Uterus (tissue), 4 donors: ENCODE measurements at regions of chr14 and their contacts with region 1.

Region 1: DNA sequence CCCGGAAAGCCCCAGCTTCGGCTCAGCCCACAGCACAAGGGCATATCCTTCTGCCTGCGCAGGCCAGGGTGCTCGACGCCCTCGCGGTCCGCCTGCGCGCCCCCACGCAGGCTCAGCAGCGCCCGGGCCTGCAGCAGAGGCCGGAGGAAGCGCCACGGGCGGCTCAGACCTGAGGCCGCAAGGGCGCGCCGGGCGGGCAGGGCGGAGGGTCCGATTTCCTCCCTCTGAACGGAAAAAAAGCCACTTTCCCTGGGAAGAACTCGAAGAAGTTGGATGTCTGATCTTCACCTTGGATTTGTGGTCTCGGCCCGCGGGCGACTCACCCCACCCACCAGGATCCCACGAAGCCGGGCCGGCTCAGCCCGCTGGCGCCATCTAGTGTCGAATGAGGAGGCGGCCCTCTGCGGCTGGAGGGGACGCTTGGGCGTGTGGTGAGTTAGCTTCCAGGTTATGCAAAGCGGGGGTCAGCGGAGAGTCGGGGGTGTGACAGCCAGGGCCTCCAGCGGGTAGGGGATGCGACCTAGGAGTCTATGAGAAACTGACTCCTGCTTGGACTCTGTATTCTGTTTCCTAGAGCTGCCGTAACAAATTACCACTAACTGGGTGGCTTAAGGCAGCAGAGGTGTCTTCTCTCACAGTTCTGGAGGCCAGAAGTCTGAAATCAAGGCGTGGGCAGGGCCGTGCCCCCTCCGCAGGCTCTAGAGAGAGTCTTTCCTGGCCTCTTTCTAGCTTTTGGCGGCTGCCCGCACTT is 40.0 kb upstream of the SRSF5 start:
- DNase-seq: peak; percentile 77 to 84
- H3K4me3 ChIP-seq: peak overlapping the region in 1 of 2 donors; percentile 29
- H3K27ac ChIP-seq: peak overlapping the region; percentile 48 to 60
- H3K4me1 ChIP-seq: no peaks in the 10 kb centered on the region
- H3K27me3 ChIP-seq: no peaks in the 10 kb centered on the region
- CTCF ChIP-seq: peak; percentile 97 to 98 (median 98)
- POLR2A ChIP-seq: no peak

Region 2: GRCh38 chr14:69519204-69520100 is 207.5 kb before region 1 on chr14:
- intact Hi-C with region 1: no loop called
- DNase-seq: peak in 1 of 2 donors; percentile 48
- H3K4me3 ChIP-seq: no peak overlapping the region
- H3K27ac ChIP-seq: peak overlapping the region; percentile 45 to 52
- H3K4me1 ChIP-seq: peaks cover 0 to 3% of the 10 kb centered on the region in 2 donors
- H3K27me3 ChIP-seq: no peaks in the 10 kb centered on the region
- CTCF ChIP-seq: no peak
- POLR2A ChIP-seq: no peak

Region 3: DNA sequence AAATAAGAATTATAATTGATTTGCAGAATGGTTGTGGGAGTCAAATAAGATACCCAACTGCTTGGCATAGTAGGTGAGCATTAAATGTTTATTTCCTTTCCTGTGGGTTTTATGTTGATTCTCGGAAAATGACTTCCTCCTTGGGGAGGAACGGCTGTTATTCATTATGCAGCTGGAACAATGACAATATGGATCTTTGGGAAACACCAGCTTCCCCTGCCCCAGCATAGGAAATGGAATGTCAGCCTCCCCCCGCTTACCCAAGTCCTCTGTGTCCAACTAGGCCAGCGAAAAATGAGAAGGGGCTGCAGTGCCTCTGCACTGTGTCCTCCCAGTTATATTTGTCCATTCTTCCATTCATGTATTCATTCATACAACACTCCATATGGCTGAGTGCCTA is 140.5 kb before region 1 on chr14:
- intact Hi-C with region 1: loop called (anchors 5 kb)
- DNase-seq: no peak
- H3K4me3 ChIP-seq: no peak overlapping the region
- H3K27ac ChIP-seq: no peak overlapping the region
- H3K4me1 ChIP-seq: no peaks in the 10 kb centered on the region
- H3K27me3 ChIP-seq: no peaks in the 10 kb centered on the region
- CTCF ChIP-seq: no peak
- POLR2A ChIP-seq: no peak

Region 4: DNA sequence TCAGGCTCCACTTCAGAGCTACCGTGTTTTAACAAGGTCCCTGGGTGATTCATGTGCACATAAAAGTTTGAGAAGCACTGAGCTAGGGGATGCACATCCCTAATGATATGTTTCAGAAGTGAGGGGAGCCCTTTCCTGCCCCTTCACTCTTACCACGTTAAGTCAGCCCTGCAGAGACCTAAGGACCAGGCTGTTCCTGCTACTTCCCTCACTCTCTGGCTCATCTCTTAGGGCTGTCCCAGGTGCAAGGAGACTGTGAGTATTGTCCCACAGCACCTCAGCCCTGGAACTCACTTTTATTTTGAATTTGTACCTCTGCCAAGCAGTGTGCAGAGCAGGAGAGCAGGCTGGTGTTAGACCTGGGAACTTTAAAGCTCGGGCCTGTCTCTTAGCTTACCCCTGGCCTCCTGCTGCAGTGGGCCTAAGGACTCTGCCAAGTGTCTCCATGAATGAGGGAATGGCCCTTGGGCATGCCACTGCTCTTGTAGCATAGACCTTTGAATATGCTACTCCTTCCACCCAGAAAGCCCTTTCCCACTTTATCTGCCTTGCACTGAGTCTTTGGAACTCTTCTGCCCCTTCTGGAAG is 126.5 kb before region 1 on chr14:
- intact Hi-C with region 1: loop called (anchors 5 kb)
- DNase-seq: no peak
- H3K4me3 ChIP-seq: no peak overlapping the region
- H3K27ac ChIP-seq: no peak overlapping the region
- H3K4me1 ChIP-seq: no peaks in the 10 kb centered on the region
- H3K27me3 ChIP-seq: no peaks in the 10 kb centered on the region
- CTCF ChIP-seq: no peak
- POLR2A ChIP-seq: no peak